GM12878 (cell line): ENCODE measurements at regions of chr10 and their contacts with region 1.

Region 1: GRCh38 chr10:43105102-43105785 is 28.4 kb downstream of the RET start:
- DNase-seq: no peak
- ATAC-seq: peak; percentile 95
- H3K4me3 ChIP-seq: peak overlapping the region; percentile 72; the same call in 1 of the 2 replicates
- H3K27ac ChIP-seq: no peak overlapping the region
- H3K4me1 ChIP-seq: peaks cover 9% of the 10 kb centered on the region
- H3K27me3 ChIP-seq: peaks cover 4 to 5% of the 10 kb centered on the region in 2 experiments; a peak in 3 of 4 replicates
- CTCF ChIP-seq: peak; percentile 95 to 99 (median 97); a peak in 5 of 6 replicates
- EP300 ChIP-seq: no peak
- POLR2A ChIP-seq: no peak
- RAD21 ChIP-seq: peak; percentile 89

Region 2: GRCh38 chr10:42177077-42177792 is 928.0 kb before region 1 on chr10:
- CTCF ChIA-PET with region 1: no interaction called
- POLR2A ChIA-PET with region 1: no interaction called
- RAD21 ChIA-PET with region 1: no interaction called
- SMC1A ChIA-PET with region 1: no interaction called
- in situ Hi-C with region 1: loop called (anchors 25 kb)
- intact Hi-C with region 1: no loop called
- DNase-seq: no peak
- ATAC-seq: no peak
- H3K4me3 ChIP-seq: no peak overlapping the region
- H3K27ac ChIP-seq: no peak overlapping the region
- H3K4me1 ChIP-seq: no peaks in the 10 kb centered on the region
- H3K27me3 ChIP-seq: no peaks in the 10 kb centered on the region
- CTCF ChIP-seq: no peak
- EP300 ChIP-seq: no peak
- POLR2A ChIP-seq: no peak
- RAD21 ChIP-seq: no peak

Region 3: DNA sequence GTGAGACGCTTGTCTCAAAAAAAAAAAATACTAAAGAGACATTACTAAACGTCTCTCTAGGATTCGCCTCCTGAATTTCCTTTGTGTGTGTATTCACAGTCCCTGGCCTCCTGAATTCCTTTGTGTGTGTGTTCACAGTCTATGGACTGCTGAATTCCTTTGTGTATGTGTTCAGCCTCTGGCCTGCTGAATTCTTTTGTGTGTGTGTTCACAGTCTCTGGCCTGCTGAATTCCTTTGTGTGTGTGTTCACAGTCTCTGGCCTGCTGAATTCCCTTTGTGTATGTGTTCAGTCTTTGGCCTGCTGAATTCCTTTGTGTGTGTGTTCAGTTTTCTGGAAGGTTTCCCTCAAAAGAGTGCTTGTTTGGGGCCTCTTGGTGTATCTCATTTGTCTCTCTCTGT is 314.4 kb before region 1 on chr10:
- CTCF ChIA-PET with region 1: no interaction called
- POLR2A ChIA-PET with region 1: no interaction called
- RAD21 ChIA-PET with region 1: no interaction called
- SMC1A ChIA-PET with region 1: no interaction called
- in situ Hi-C with region 1: no loop called
- intact Hi-C with region 1: loop called (anchors 10 kb)
- DNase-seq: no peak
- ATAC-seq: no peak
- H3K4me3 ChIP-seq: no peak overlapping the region
- H3K27ac ChIP-seq: no peak overlapping the region
- H3K4me1 ChIP-seq: no peaks in the 10 kb centered on the region
- H3K27me3 ChIP-seq: no peaks in the 10 kb centered on the region
- CTCF ChIP-seq: no peak
- EP300 ChIP-seq: no peak
- POLR2A ChIP-seq: no peak
- RAD21 ChIP-seq: no peak

Region 4: DNA sequence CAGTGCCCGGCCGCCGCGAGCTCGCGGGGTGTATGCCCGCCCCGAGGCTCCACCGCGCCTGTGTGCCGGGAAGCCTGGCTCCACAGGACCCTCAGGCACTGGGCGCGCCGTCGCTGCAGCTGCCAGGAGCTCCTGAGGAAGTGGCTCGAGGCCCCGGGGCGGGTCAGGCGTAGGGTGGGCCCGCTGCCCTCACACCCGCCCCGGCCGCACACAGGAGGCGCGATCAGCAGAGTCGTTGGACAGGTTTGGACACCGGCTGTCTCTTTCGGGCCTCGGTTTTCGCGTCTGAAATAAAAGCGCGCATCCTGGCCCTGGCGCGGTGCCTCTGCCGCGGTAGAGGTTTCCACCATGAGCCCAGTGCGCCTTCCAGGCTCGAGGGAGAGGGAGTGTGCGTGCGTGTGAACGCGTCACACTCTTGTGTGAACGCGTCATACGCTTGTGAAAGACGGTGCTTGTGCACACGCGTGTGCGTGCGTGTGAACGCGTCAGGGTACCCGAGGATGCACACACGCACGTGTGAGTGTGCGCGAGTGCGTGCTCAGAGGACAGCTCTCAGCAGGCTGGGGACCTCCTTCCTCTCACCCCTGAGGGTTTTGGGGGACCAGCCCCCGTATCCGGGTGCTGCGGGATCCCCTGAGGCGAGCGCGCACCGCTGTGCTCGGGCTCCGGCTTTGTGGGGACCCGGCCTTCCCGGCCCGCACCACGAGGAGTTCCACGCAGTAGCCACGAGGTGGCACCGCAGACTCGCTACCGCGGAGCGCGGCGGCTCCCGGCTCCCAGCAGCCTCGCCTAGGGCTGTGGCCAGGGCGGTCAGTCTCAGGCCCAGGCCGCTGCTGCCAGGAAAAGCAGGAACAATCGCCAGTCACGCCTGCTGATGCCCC is 238.9 kb before region 1 on chr10:
- CTCF ChIA-PET with region 1: interaction called, 3 read pairs
- POLR2A ChIA-PET with region 1: no interaction called
- RAD21 ChIA-PET with region 1: no interaction called
- SMC1A ChIA-PET with region 1: no interaction called
- in situ Hi-C with region 1: no loop called
- intact Hi-C with region 1: loop called (anchors 2 kb)
- DNase-seq: no peak
- ATAC-seq: peak; percentile 80
- H3K4me3 ChIP-seq: no peak overlapping the region
- H3K27ac ChIP-seq: no peak overlapping the region
- H3K4me1 ChIP-seq: no peaks in the 10 kb centered on the region
- H3K27me3 ChIP-seq: no peaks in the 10 kb centered on the region; a peak in 1 of 4 replicates
- CTCF ChIP-seq: peak; percentile 20 to 45 (median 42); a peak in 4 of 6 replicates
- EP300 ChIP-seq: no peak
- POLR2A ChIP-seq: no peak
- RAD21 ChIP-seq: peak; percentile 54

Region 5: GRCh38 chr10:43000651-43001423 is 104.4 kb before region 1 on chr10:
- CTCF ChIA-PET with region 1: no interaction called
- POLR2A ChIA-PET with region 1: no interaction called
- RAD21 ChIA-PET with region 1: no interaction called
- SMC1A ChIA-PET with region 1: no interaction called
- in situ Hi-C with region 1: loop called (anchors 25 kb)
- intact Hi-C with region 1: no loop called
- DNase-seq: no peak
- ATAC-seq: no peak
- H3K4me3 ChIP-seq: no peak overlapping the region
- H3K27ac ChIP-seq: no peak overlapping the region
- H3K4me1 ChIP-seq: no peaks in the 10 kb centered on the region
- H3K27me3 ChIP-seq: no peaks in the 10 kb centered on the region
- CTCF ChIP-seq: no peak
- EP300 ChIP-seq: no peak
- POLR2A ChIP-seq: no peak
- RAD21 ChIP-seq: no peak